ENCODE measurements at regions of chr1 and their contacts with region 1.

Region 1: DNA sequence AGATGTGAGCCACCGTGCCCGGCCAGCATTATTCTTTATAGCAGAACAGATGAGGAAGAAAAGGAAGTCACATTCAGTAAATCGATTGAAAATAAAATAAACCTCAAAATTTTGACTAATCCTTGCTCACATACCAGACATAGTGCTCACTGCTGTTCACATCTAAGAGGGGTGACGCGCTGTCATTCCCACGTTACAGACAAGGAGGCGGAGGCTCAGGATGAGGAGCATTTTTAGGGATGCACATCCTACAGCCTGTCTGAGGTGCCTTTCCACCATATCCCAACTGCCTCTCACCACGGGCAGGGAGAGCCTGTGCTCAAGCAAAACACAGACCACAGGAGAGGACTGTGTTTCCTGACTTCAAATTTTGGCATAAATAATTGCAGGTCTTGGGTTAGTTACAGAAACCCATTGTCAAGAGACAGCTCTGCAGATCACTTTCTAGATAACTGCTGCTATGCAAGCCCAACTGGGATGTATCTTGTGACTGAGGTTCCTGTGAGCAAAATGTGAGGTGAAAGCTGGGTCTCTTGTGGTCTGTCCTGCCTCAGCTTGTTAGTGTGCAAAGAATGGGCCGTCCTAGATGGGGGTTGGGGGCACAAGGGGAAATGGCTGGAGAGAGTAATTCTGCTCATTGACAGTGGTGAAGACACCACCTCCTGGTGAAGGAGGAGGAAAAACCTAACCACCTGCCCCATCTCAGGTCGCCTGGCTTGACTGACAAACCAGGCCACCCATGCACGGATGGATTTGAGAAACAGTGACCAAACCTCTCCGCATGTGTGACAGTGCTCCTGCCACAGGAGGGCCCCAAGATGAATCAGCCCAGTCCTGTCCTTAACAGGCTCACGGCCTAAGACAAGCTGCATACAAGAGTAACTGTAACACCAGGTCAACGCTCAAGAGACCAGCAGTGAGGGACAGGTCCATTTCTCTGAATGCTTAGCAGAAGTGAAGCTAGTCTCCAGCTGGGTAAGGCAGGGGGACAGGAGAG is 8.2 kb downstream of the TNN start:
- DNase-seq: no peak
- H3K4me3 ChIP-seq: no peak overlapping the region
- H3K27ac ChIP-seq: no peak overlapping the region
- H3K4me1 ChIP-seq: peaks cover 0 to 7% of the 10 kb centered on the region in 2 experiments; a peak in 1 of 4 replicates
- H3K27me3 ChIP-seq: no peaks in the 10 kb centered on the region
- CTCF ChIP-seq: no peak
- EP300 ChIP-seq: no peak
- RAD21 ChIP-seq: no peak

Region 2: DNA sequence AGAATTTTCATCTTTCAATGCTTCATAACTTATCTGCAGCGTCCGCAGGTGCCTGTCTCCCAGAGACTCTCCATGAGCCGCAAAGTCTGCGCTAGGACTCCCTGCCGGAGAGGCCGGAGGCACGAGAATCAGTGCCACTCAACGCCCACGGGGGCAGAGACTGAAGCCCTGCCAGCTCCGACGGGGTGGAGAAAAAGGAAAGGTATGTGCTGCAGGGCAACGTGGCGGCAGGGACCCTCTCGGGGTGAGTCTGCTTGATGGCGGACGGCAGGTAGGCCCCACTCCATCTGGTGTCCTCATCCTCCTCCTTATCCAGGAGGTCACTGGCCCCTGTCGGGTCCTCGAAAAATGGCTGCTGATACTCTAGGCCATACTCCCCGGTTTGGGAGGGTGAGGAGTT is 30.8 kb before region 1 on chr1:
- CTCF ChIA-PET with region 1: no interaction called
- POLR2A ChIA-PET with region 1: no interaction called
- DNase-seq: no peak
- H3K4me3 ChIP-seq: no peak overlapping the region
- H3K27ac ChIP-seq: no peak overlapping the region
- H3K4me1 ChIP-seq: no peaks in the 10 kb centered on the region
- H3K27me3 ChIP-seq: no peaks in the 10 kb centered on the region
- CTCF ChIP-seq: no peak
- EP300 ChIP-seq: no peak
- RAD21 ChIP-seq: no peak

Region 3: GRCh38 chr1:175089136-175089718 is 13.4 kb after region 1 on chr1:
- CTCF ChIA-PET with region 1: interaction called, 12 read pairs
- POLR2A ChIA-PET with region 1: no interaction called
- DNase-seq: no peak
- H3K4me3 ChIP-seq: no peak overlapping the region
- H3K27ac ChIP-seq: peak overlapping the region in 1 of 2 experiments; percentile 71; a peak in 2 of 4 replicates
- H3K4me1 ChIP-seq: peaks cover 0 to 23% of the 10 kb centered on the region in 2 experiments; a peak in 2 of 4 replicates
- H3K27me3 ChIP-seq: no peaks in the 10 kb centered on the region; the same call in 1 of the 2 replicates
- CTCF ChIP-seq: no peak
- EP300 ChIP-seq: no peak
- RAD21 ChIP-seq: no peak

Measured in SK-N-SH (cell line).